ENCODE measurements at regions of chr10 and their contacts with region 1.

Region 1: GRCh38 chr10:84156768-84157167 is 16.8 kb upstream of the GPR15LG start:
- DNase-seq: peak in 2 of 9 donors; percentile 23 to 30
- ATAC-seq: peak; percentile 97
- H3K4me3 ChIP-seq: no peak overlapping the region
- H3K4me3 Mint-ChIP-seq: no peak overlapping the region
- H3K27ac ChIP-seq: no peak overlapping the region
- H3K27ac Mint-ChIP-seq: peak overlapping the region; percentile 30 to 85 (median 65)
- H3K4me1 ChIP-seq: no peaks in the 10 kb centered on the region
- H3K4me1 Mint-ChIP-seq: peaks cover 4 to 19% (median 13%) of the 10 kb centered on the region in 7 donors
- H3K27me3 ChIP-seq: no peaks in the 10 kb centered on the region
- H3K27me3 Mint-ChIP-seq: peaks cover 0 to 6% (median 0%) of the 10 kb centered on the region in 5 donors

Region 2: GRCh38 chr10:84205049-84205852 is 48.5 kb after region 1 on chr10:
- CTCF ChIA-PET with region 1: interaction called, 3 read pairs
- POLR2A ChIA-PET with region 1: no interaction called
- intact Hi-C with region 1: loop called in 1 of 2 experiments (anchors 2 kb)
- DNase-seq: peak; percentile 20 to 73 (median 52)
- ATAC-seq: peak; percentile 88
- H3K4me3 ChIP-seq: no peak overlapping the region
- H3K4me3 Mint-ChIP-seq: no peak overlapping the region
- H3K27ac ChIP-seq: no peak overlapping the region
- H3K27ac Mint-ChIP-seq: peak overlapping the region in 3 of 9 donors; percentile 8 to 76 (median 51)
- H3K4me1 ChIP-seq: no peaks in the 10 kb centered on the region
- H3K4me1 Mint-ChIP-seq: no peaks in the 10 kb centered on the region
- H3K27me3 ChIP-seq: no peaks in the 10 kb centered on the region
- H3K27me3 Mint-ChIP-seq: peaks cover 0 to 13% (median 8%) of the 10 kb centered on the region in 5 donors

Measured in naive thymus-derived CD4-positive, alpha-beta T cell (primary cell).